ENCODE measurements at regions of chr6 and their contacts with region 1.

Region 1: GRCh38 chr6:54655162-54655561 is 191.4 kb upstream of the FAM83B start:
- DNase-seq: peak; percentile 86
- ATAC-seq: peak; percentile 98
- H3K4me3 ChIP-seq: no peak overlapping the region
- H3K27ac ChIP-seq: 0 out of 2 replicates have a peak overlapping the region, but pooled peaks have one; percentile 9
- H3K4me1 ChIP-seq: peaks cover 19% of the 10 kb centered on the region
- H3K27me3 ChIP-seq: no peaks in the 10 kb centered on the region
- CTCF ChIP-seq: no peak

Region 2: GRCh38 chr6:54377776-54378175 is 277.4 kb before region 1 on chr6:
- CTCF ChIA-PET with region 1: no interaction called
- POLR2A ChIA-PET with region 1: no interaction called
- intact Hi-C with region 1: loop called (anchors 10 kb)
- DNase-seq: peak; percentile 58
- ATAC-seq: peak; percentile 57
- H3K4me3 ChIP-seq: no peak overlapping the region
- H3K27ac ChIP-seq: no peak overlapping the region
- H3K4me1 ChIP-seq: peaks cover 16% of the 10 kb centered on the region
- H3K27me3 ChIP-seq: no peaks in the 10 kb centered on the region
- CTCF ChIP-seq: no peak

Region 3: DNA sequence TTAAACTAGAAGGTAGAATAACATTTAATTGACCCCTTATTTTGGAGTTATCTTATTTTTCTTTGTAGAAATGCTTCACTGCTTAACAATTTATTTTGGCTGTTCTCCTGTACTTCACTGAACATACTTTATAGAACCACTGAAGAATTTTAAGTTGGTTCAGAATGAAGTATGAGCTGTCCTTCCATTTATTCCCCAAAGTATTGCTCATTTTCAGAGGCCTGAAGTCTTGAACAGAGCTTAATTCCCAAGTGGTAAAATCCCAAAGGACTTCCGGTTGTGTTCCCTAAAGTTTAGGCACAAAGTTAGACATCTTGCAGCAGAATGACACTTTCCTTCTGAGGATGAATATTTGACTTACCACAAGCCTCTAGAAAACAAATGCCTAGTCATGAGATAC is 113.6 kb before region 1 on chr6:
- CTCF ChIA-PET with region 1: no interaction called
- POLR2A ChIA-PET with region 1: no interaction called
- intact Hi-C with region 1: no loop called
- DNase-seq: no peak
- ATAC-seq: no peak
- H3K4me3 ChIP-seq: no peak overlapping the region
- H3K27ac ChIP-seq: no peak overlapping the region
- H3K4me1 ChIP-seq: no peaks in the 10 kb centered on the region
- H3K27me3 ChIP-seq: no peaks in the 10 kb centered on the region
- CTCF ChIP-seq: no peak

Region 4: GRCh38 chr6:54640911-54641310 is 14.3 kb before region 1 on chr6:
- CTCF ChIA-PET with region 1: no interaction called
- POLR2A ChIA-PET with region 1: no interaction called
- intact Hi-C with region 1: no loop called
- DNase-seq: no peak
- ATAC-seq: no peak
- H3K4me3 ChIP-seq: no peak overlapping the region
- H3K27ac ChIP-seq: no peak overlapping the region
- H3K4me1 ChIP-seq: no peaks in the 10 kb centered on the region
- H3K27me3 ChIP-seq: no peaks in the 10 kb centered on the region
- CTCF ChIP-seq: no peak